Head of caudate nucleus (tissue), 42 donors: ENCODE measurements at regions of chr6 and their contacts with region 1.

Region 1: GRCh38 chr6:56764081-56764566 is 121.4 kb upstream of the DST start:
- DNase-seq: peak in 22 of 42 donors; percentile 35 to 82 (median 60)

Region 2: GRCh38 chr6:56851541-56852259 is 87.6 kb after region 1 on chr6:
- intact Hi-C with region 1: loop called (anchors 5 kb)
- DNase-seq: peak; percentile 25 to 88 (median 62)